ENCODE measurements at regions of chr9 and their contacts with region 1.

Region 1: GRCh38 chr9:76576344-76576743 is 117.4 kb downstream of the GCNT1 start:
- DNase-seq: no peak
- ATAC-seq: peak in 5 of 8 donors; percentile 29 to 52 (median 50)
- H3K4me3 ChIP-seq: no peak overlapping the region
- H3K27ac ChIP-seq: peak overlapping the region in 1 of 10 donors; percentile 69
- H3K4me1 ChIP-seq: peaks cover 0 to 68% (median 0%) of the 10 kb centered on the region in 9 donors
- H3K27me3 ChIP-seq: peaks cover 0 to 16% (median 0%) of the 10 kb centered on the region in 7 donors
- CTCF ChIP-seq: no peak

Region 2: GRCh38 chr9:76127637-76128036 is 448.7 kb before region 1 on chr9:
- intact Hi-C with region 1: no loop called
- DNase-seq: no peak
- ATAC-seq: no peak
- H3K4me3 ChIP-seq: no peak overlapping the region
- H3K27ac ChIP-seq: no peak overlapping the region
- H3K4me1 ChIP-seq: no peaks in the 10 kb centered on the region
- H3K27me3 ChIP-seq: no peaks in the 10 kb centered on the region
- CTCF ChIP-seq: no peak

Region 3: DNA sequence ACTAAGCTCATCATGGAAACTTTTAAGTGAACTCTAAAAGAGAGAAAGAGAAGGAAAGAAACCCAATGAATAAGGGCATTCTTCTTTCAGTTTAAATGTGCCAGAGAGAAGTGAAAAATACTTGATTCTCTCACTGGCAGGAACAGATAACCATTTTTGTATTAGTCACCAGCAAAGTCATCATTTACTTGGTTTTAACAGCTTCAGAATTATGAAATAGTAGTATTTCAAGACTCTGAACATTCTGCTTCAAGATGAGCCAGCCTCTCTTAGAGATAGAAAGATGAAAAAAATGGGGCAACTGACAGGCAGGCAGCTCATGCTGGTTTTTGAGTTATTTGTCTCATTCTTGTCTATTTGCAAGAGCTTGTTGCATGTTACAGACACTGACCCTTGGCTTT is 13.8 kb before region 1 on chr9:
- intact Hi-C with region 1: loop called in 1 of 10 experiments (anchors 1 kb)
- DNase-seq: no peak
- ATAC-seq: peak in 4 of 8 donors; percentile 34 to 69 (median 41)
- H3K4me3 ChIP-seq: no peak overlapping the region
- H3K27ac ChIP-seq: peak overlapping the region in 3 of 10 donors; percentile 3 to 72 (median 15)
- H3K4me1 ChIP-seq: peaks cover 0 to 59% (median 0%) of the 10 kb centered on the region in 9 donors
- H3K27me3 ChIP-seq: no peaks in the 10 kb centered on the region
- CTCF ChIP-seq: no peak

Region 4: GRCh38 chr9:76643399-76644117 is 67.2 kb after region 1 on chr9:
- intact Hi-C with region 1: loop called in 1 of 10 experiments (anchors 10 kb)
- DNase-seq: no peak
- ATAC-seq: peak in 6 of 8 donors; percentile 33 to 81 (median 58)
- H3K4me3 ChIP-seq: no peak overlapping the region
- H3K27ac ChIP-seq: peak overlapping the region in 3 of 10 donors; percentile 5 to 71 (median 6)
- H3K4me1 ChIP-seq: peaks cover 0 to 28% (median 0%) of the 10 kb centered on the region in 9 donors
- H3K27me3 ChIP-seq: no peaks in the 10 kb centered on the region
- CTCF ChIP-seq: no peak